HCT116 (cell line): ENCODE measurements at regions of chr5 and their contacts with region 1.

Region 1: GRCh38 chr5:107232788-107233187 is 437.9 kb downstream of the EFNA5 start:
- DNase-seq: no peak
- ATAC-seq: no peak
- H3K4me3 ChIP-seq: no peak overlapping the region
- H3K27ac ChIP-seq: no peak overlapping the region
- H3K4me1 ChIP-seq: no peaks in the 10 kb centered on the region
- H3K27me3 ChIP-seq: no peaks in the 10 kb centered on the region
- CTCF ChIP-seq: no peak
- POLR2A ChIP-seq: no peak
- RAD21 ChIP-seq: no peak

Region 2: DNA sequence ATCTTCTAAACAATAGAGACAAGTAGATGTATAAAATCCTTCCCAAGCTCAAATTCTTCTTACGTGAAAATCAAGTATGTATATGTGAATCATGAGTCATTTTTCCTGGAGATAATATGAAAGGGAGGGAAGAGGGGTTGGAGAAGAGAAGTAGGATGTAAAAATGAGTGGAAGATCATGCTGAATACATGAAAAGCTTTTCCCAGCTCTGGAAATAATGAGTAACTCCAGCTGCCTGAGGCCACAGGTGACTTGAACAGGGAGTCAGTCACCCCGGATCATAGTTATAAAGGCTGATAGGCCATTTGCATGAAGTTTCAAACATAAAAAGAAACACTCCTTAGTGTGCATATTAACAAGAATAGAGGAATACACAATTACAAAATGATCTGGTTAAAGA is 48.7 kb before region 1 on chr5:
- CTCF ChIA-PET with region 1: no interaction called
- POLR2A ChIA-PET with region 1: no interaction called
- RAD21 ChIA-PET with region 1: no interaction called
- intact Hi-C with region 1: no loop called
- DNase-seq: no peak
- ATAC-seq: no peak
- H3K4me3 ChIP-seq: no peak overlapping the region
- H3K27ac ChIP-seq: no peak overlapping the region
- H3K4me1 ChIP-seq: no peaks in the 10 kb centered on the region
- H3K27me3 ChIP-seq: no peaks in the 10 kb centered on the region
- CTCF ChIP-seq: no peak
- POLR2A ChIP-seq: no peak
- RAD21 ChIP-seq: no peak

Region 3: GRCh38 chr5:107248066-107248695 is 15.4 kb after region 1 on chr5:
- CTCF ChIA-PET with region 1: interaction called, 14 read pairs
- POLR2A ChIA-PET with region 1: no interaction called
- RAD21 ChIA-PET with region 1: no interaction called
- intact Hi-C with region 1: no loop called
- DNase-seq: peak; percentile 53
- ATAC-seq: peak; percentile 73
- H3K4me3 ChIP-seq: no peak overlapping the region
- H3K27ac ChIP-seq: no peak overlapping the region
- H3K4me1 ChIP-seq: no peaks in the 10 kb centered on the region
- H3K27me3 ChIP-seq: no peaks in the 10 kb centered on the region
- CTCF ChIP-seq: peak; percentile 41 to 97 (median 81); a peak in 5 of 6 replicates
- POLR2A ChIP-seq: no peak
- RAD21 ChIP-seq: peak; percentile 71

Region 4: DNA sequence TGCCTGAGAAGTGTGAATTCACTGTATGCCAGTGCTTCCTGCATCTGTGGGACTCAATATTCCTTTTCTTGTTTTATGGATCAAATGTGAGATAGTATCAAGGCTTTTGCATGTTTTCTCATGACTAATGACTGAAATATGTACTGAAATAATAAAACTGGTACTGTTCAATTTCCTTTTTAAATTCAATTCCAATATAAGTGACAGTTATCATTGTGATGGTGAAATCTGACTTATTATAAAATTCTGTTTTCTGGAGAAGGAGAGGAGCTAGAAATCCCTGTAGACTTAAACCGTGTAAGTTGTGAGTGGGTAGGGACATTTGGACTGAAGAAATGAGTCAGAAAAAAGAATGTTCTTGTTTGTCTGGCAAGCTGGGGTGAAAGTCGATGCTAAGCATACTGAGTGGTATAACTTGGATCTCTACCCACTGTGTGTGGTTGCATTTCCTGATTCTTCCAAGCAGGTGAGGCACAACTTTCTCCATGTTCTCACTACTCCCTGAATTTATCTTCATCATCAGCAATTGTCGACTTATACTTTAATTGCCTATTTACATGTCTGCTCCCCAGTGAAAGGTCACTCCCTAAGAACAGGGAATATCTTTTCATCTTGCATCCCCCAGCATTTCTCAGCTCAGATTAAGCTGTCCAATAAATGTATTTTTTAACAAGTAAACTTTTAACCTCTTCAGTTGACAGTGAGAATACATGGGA is 192.9 kb after region 1 on chr5:
- CTCF ChIA-PET with region 1: no interaction called
- POLR2A ChIA-PET with region 1: no interaction called
- RAD21 ChIA-PET with region 1: no interaction called
- intact Hi-C with region 1: no loop called
- DNase-seq: peak; percentile 36
- ATAC-seq: peak; percentile 90
- H3K4me3 ChIP-seq: peak overlapping the region in 1 of 2 experiments; percentile 10; a peak in 1 of 4 replicates
- H3K27ac ChIP-seq: no peak overlapping the region
- H3K4me1 ChIP-seq: peaks cover 15 to 21% of the 10 kb centered on the region in 2 experiments; a peak in 3 of 4 replicates
- H3K27me3 ChIP-seq: no peaks in the 10 kb centered on the region
- CTCF ChIP-seq: no peak
- POLR2A ChIP-seq: no peak
- RAD21 ChIP-seq: no peak